HepG2 (cell line): ENCODE measurements at regions of chr19 and their contacts with region 1.

Region 1: GRCh38 chr19:10332955-10333757 is at the start of gene RAVER1:
- DNase-seq: peak; percentile 91
- ATAC-seq: peak; percentile 70
- H3K4me3 ChIP-seq: peak within 1 kb of the TSS; percentile 77 to 89 (median 86)
- H3K27ac ChIP-seq: peak within 1 kb of the TSS; percentile 95
- H3K4me1 ChIP-seq: peaks cover 37% of the 10 kb centered on the region
- H3K27me3 ChIP-seq: no peaks in the 10 kb centered on the region; a peak in 1 of 5 replicates
- CTCF ChIP-seq: no peak
- EP300 ChIP-seq: no peak; a peak in 1 of 4 replicates
- POLR2A ChIP-seq: peak; percentile 75 to 92
- RAD21 ChIP-seq: peak; percentile 42
- total RNA-seq, gene RAVER1: 7.9 and 17.7 TPM in 2 replicates

Region 2: DNA sequence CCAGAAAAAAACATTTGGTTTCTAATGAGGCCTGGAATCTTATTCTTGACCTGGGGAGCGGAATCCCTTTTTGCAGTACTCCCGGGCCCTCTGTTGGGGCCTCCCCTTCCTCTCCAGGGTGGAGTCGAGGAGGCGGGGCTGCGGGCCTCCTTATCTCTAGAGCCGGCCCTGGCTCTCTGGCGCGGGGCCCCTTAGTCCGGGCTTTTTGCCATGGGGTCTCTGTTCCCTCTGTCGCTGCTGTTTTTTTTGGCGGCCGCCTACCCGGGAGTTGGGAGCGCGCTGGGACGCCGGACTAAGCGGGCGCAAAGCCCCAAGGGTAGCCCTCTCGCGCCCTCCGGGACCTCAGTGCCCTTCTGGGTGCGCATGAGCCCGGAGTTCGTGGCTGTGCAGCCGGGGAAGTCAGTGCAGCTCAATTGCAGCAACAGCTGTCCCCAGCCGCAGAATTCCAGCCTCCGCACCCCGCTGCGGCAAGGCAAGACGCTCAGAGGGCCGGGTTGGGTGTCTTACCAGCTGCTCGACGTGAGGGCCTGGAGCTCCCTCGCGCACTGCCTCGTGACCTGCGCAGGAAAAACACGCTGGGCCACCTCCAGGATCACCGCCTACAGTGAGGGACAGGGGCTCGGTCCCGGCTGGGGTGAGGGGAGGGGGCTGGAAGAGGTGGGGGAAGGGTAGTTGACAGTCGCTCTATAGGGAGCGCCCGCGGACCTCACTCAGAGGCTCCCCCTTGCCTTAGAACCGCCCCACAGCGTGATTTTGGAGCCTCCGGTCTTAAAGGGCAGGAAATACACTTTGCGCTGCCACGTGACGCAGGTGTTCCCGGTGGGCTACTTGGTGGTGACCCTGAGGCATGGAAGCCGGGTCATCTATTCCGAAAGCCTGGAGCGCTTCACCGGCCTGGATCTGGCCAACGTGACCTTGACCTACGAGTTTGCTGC is 46.1 kb before region 1 on chr19 and contains the start of gene ICAM4:
- CTCF ChIA-PET with region 1: no interaction called
- POLR2A ChIA-PET with region 1: interaction called, 55 read pairs
- in situ Hi-C with region 1: no loop called
- intact Hi-C with region 1: loop called (anchors 2 kb)
- DNase-seq: peak; percentile 63
- ATAC-seq: peak; percentile 41
- H3K4me3 ChIP-seq: peak within 1 kb of the TSS; percentile 33 to 70 (median 41); a peak in 5 of 6 replicates
- H3K27ac ChIP-seq: peak within 1 kb of the TSS; percentile 30
- H3K4me1 ChIP-seq: peaks cover 68% of the 10 kb centered on the region
- H3K27me3 ChIP-seq: peaks cover 0 to 20% of the 10 kb centered on the region in 2 experiments; a peak in 3 of 5 replicates
- CTCF ChIP-seq: no peak
- EP300 ChIP-seq: peak in 1 of 2 experiments; percentile 8; a peak in 1 of 4 replicates
- POLR2A ChIP-seq: peak in 1 of 2 experiments; percentile 15; a peak in 1 of 4 replicates
- RAD21 ChIP-seq: no peak
- total RNA-seq, gene ICAM4: 1.5 and 2.9 TPM in 2 replicates

Region 3: DNA sequence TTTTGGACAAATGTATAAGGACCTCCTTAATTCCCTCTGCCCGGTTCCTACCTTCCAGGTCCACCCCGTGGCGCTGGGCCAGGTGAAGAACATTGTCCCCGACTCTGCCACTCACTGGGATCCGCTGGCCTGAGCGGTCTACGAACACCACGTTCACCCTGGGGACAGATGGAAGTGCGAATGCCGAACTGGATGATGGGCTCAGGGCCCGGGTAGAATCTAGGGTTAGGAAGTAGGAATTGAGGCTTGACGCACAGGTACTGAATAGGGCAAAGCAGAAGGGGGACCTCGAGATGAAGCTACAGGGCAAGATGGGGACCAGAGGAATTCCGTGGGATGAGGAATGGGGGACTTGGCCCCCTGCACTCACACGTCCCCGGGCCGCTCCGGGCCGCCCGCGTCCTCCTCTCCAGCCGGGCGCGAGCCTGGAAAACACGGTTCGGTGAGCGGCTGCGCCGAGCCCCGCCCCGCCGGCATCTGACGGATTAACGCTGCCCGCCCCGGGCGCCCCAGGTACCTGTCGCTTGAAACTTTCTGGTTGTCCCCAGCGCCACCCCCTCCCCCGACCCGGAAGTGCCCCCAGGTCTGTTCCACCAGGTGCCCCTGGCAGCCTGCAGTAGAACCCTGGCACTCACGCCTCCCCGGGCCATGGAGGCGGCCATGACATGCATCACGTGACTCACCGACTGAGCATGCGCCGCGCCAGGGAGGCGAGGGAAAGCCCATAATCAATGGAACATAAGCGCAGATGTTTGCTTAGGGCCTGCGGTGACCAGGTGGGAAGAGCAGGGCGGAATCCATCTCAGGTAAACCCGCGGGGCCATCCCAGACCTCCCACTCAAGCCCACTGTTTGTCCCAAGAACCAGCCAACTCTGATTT is 17.6 kb before region 1 on chr19 and contains the start of gene FDX2:
- CTCF ChIA-PET with region 1: no interaction called
- POLR2A ChIA-PET with region 1: interaction called, 24 read pairs
- in situ Hi-C with region 1: no loop called
- intact Hi-C with region 1: no loop called
- DNase-seq: peak; percentile 83
- ATAC-seq: peak; percentile 85
- H3K4me3 ChIP-seq: peak within 1 kb of the TSS; percentile 62 to 91 (median 76)
- H3K27ac ChIP-seq: peak within 1 kb of the TSS; percentile 61
- H3K4me1 ChIP-seq: peaks cover 17% of the 10 kb centered on the region
- H3K27me3 ChIP-seq: no peaks in the 10 kb centered on the region; a peak in 2 of 5 replicates
- CTCF ChIP-seq: no peak
- EP300 ChIP-seq: no peak
- POLR2A ChIP-seq: peak; percentile 59 to 87
- RAD21 ChIP-seq: peak; percentile 19
- total RNA-seq, gene FDX2: 21.0 and 22.6 TPM in 2 replicates

Region 4: GRCh38 chr19:10346509-10346908 is 13.4 kb after region 1 on chr19:
- CTCF ChIA-PET with region 1: no interaction called
- POLR2A ChIA-PET with region 1: interaction called, 38 read pairs
- in situ Hi-C with region 1: no loop called
- intact Hi-C with region 1: no loop called
- DNase-seq: peak; percentile 74
- ATAC-seq: peak; percentile 90
- H3K4me3 ChIP-seq: peak overlapping the region in 1 of 3 experiments; percentile 31; a peak in 1 of 6 replicates
- H3K27ac ChIP-seq: peak overlapping the region; percentile 41
- H3K4me1 ChIP-seq: peaks cover 18% of the 10 kb centered on the region
- H3K27me3 ChIP-seq: no peaks in the 10 kb centered on the region
- CTCF ChIP-seq: no peak
- EP300 ChIP-seq: no peak
- POLR2A ChIP-seq: no peak
- RAD21 ChIP-seq: no peak

Region 5: GRCh38 chr19:10388957-10389356 is 55.8 kb after region 1 on chr19:
- CTCF ChIA-PET with region 1: interaction called, 3 read pairs
- POLR2A ChIA-PET with region 1: interaction called, 4 read pairs
- in situ Hi-C with region 1: loop called (anchors 5 kb)
- intact Hi-C with region 1: loop called (anchors 5 kb)
- DNase-seq: peak; percentile 80
- ATAC-seq: peak; percentile 63
- H3K4me3 ChIP-seq: no peak overlapping the region
- H3K27ac ChIP-seq: no peak overlapping the region
- H3K4me1 ChIP-seq: peaks cover 20% of the 10 kb centered on the region
- H3K27me3 ChIP-seq: no peaks in the 10 kb centered on the region
- CTCF ChIP-seq: peak; percentile 90
- EP300 ChIP-seq: no peak
- POLR2A ChIP-seq: 0 out of 4 replicates have a peak, but pooled peaks of 1 of the 2 experiments have one; percentile 23
- RAD21 ChIP-seq: peak; percentile 70

Region 6: GRCh38 chr19:10439588-10439987 is 106.4 kb after region 1 on chr19:
- CTCF ChIA-PET with region 1: no interaction called
- POLR2A ChIA-PET with region 1: no interaction called
- in situ Hi-C with region 1: no loop called
- intact Hi-C with region 1: no loop called
- DNase-seq: no peak
- ATAC-seq: no peak
- H3K4me3 ChIP-seq: no peak overlapping the region
- H3K27ac ChIP-seq: no peak overlapping the region
- H3K4me1 ChIP-seq: no peaks in the 10 kb centered on the region
- H3K27me3 ChIP-seq: no peaks in the 10 kb centered on the region
- CTCF ChIP-seq: no peak
- EP300 ChIP-seq: no peak
- POLR2A ChIP-seq: no peak
- RAD21 ChIP-seq: no peak